WTC11 (cell line): ENCODE measurements at regions of chr1 and their contacts with region 1.

Region 1: DNA sequence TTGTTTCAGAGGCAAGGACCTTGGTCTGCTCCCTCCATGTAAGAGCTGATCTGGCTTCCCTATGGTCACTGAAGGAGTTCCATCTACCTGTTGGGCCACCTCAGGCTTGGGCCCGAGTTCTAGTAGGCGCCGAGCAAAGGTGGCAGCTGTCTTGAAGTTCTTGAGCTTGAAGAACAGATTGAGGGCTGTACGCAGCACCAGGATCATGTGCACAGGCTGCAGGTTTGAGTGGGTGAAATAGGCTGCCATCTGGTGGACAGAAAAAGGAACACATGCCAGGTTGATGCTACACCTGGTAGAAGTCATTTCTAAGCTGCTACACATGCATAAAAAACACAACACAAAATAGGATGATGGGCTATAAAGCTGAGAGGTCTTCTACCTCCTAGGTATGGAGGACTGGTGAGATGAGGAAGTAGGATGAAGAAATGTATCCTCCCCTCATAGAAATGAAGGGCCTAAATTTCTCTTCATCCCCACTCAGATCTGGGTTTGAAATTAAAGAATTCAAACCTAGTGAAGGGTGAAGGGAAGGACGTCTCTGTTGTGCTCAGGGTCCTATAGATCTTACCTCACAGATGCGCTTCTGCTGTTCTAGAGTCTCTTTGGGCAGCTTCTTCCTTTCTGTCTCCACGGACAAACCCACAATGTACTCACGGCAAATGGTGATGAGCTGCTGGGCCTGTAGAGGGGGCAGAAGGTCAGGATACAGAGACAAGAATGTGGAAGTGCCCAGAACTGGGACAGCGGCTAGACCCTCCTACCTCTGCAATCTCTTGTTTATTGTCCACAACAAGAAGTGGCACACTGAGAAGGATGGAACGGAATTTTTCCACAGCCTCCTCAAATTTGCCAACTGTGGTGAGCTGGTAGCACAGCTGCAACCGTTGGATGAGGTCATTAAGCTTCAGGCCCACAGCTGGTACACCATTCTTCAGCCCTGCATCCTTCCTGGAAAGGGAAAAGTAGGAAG is 6.6 kb upstream of the PEX19 start:
- DNase-seq: peak; percentile 61
- ATAC-seq: peak; percentile 95
- H3K4me3 Mint-ChIP-seq: no peak overlapping the region
- H3K27ac Mint-ChIP-seq: no peak overlapping the region
- H3K4me1 Mint-ChIP-seq: peaks cover 2% of the 10 kb centered on the region
- H3K27me3 Mint-ChIP-seq: no peaks in the 10 kb centered on the region
- CTCF ChIP-seq: peak; percentile 66

Region 2: GRCh38 chr1:159960721-159961381 is 330.7 kb before region 1 on chr1:
- CTCF ChIA-PET with region 1: no interaction called
- POLR2A ChIA-PET with region 1: no interaction called
- DNase-seq: no peak
- ATAC-seq: no peak
- H3K4me3 Mint-ChIP-seq: no peak overlapping the region
- H3K27ac Mint-ChIP-seq: no peak overlapping the region
- H3K4me1 Mint-ChIP-seq: peaks cover 11% of the 10 kb centered on the region
- H3K27me3 Mint-ChIP-seq: peaks cover 2% of the 10 kb centered on the region
- CTCF ChIP-seq: no peak

Region 3: GRCh38 chr1:160085686-160086455 is 205.7 kb before region 1 on chr1:
- CTCF ChIA-PET with region 1: interaction called, 13 read pairs
- POLR2A ChIA-PET with region 1: no interaction called
- DNase-seq: peak; percentile 94
- ATAC-seq: peak; percentile 74
- H3K4me3 Mint-ChIP-seq: no peak overlapping the region
- H3K27ac Mint-ChIP-seq: no peak overlapping the region
- H3K4me1 Mint-ChIP-seq: peaks cover 19% of the 10 kb centered on the region
- H3K27me3 Mint-ChIP-seq: peaks cover 51% of the 10 kb centered on the region
- CTCF ChIP-seq: peak; percentile 92

Region 4: GRCh38 chr1:160161965-160162705 is 129.4 kb before region 1 on chr1:
- CTCF ChIA-PET with region 1: interaction called, 27 read pairs
- POLR2A ChIA-PET with region 1: no interaction called
- DNase-seq: peak; percentile 78
- ATAC-seq: peak; percentile 98
- H3K4me3 Mint-ChIP-seq: no peak overlapping the region
- H3K27ac Mint-ChIP-seq: no peak overlapping the region
- H3K4me1 Mint-ChIP-seq: peaks cover 20% of the 10 kb centered on the region
- H3K27me3 Mint-ChIP-seq: peaks cover 14% of the 10 kb centered on the region
- CTCF ChIP-seq: peak; percentile 59

Region 5: GRCh38 chr1:160219062-160219929 is 72.2 kb before region 1 on chr1:
- CTCF ChIA-PET with region 1: interaction called, 17 read pairs
- POLR2A ChIA-PET with region 1: no interaction called
- DNase-seq: peak; percentile 69
- ATAC-seq: peak; percentile 87
- H3K4me3 Mint-ChIP-seq: no peak overlapping the region
- H3K27ac Mint-ChIP-seq: peak overlapping the region; percentile 79
- H3K4me1 Mint-ChIP-seq: peaks cover 15% of the 10 kb centered on the region
- H3K27me3 Mint-ChIP-seq: no peaks in the 10 kb centered on the region
- CTCF ChIP-seq: no peak

Region 6: GRCh38 chr1:160277330-160277729 is 14.2 kb before region 1 on chr1:
- CTCF ChIA-PET with region 1: interaction called, 10 read pairs
- POLR2A ChIA-PET with region 1: no interaction called
- DNase-seq: no peak
- ATAC-seq: no peak
- H3K4me3 Mint-ChIP-seq: no peak overlapping the region
- H3K27ac Mint-ChIP-seq: no peak overlapping the region
- H3K4me1 Mint-ChIP-seq: no peaks in the 10 kb centered on the region
- H3K27me3 Mint-ChIP-seq: peaks cover 3% of the 10 kb centered on the region; the same call in 1 of the 2 replicates
- CTCF ChIP-seq: no peak

Region 7: GRCh38 chr1:160315359-160315758 is 23.8 kb after region 1 on chr1:
- CTCF ChIA-PET with region 1: interaction called, 12 read pairs
- POLR2A ChIA-PET with region 1: no interaction called
- DNase-seq: no peak
- ATAC-seq: no peak
- H3K4me3 Mint-ChIP-seq: no peak overlapping the region
- H3K27ac Mint-ChIP-seq: no peak overlapping the region
- H3K4me1 Mint-ChIP-seq: no peaks in the 10 kb centered on the region
- H3K27me3 Mint-ChIP-seq: no peaks in the 10 kb centered on the region
- CTCF ChIP-seq: no peak